ENCODE measurements at regions of chr10 and their contacts with region 1.

Region 1: DNA sequence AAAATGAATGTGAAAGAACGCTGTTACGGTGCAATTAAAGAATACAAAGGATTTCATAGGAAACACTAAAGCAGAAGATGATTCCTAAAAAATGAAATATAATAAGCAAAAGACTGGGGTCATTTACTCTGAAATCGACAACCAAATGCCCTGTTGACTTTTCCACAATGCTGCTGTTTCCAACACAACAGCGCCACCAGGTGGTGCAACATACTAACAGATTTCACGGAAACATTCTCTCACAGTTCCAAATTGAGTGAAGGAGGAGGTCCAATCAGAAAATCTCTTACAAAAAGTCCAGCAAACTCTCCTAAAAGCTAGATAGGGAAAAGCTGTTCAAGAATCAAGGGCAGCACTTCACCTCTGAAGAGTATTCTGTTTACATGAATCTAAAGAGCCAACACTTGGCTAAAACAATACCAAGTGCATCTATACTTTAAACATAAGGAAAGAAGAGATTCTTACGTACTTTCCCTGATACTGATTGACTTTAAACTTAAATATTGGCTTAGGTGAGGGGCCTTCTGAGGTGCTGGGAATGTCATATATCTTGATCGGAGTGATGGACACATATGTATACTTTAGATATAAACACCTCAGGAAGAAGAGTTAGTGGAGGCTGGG is 55.9 kb downstream of the UPF2 start:
- DNase-seq: peak in 5 of 6 donors; percentile 71 to 90 (median 81)
- ATAC-seq: peak; percentile 83 to 93 (median 92)
- H3K4me3 ChIP-seq: no peak overlapping the region
- H3K27ac ChIP-seq: peak overlapping the region in 3 of 4 donors; percentile 20 to 81 (median 66)
- H3K4me1 ChIP-seq: peaks cover 8 to 17% (median 12%) of the 10 kb centered on the region in 3 donors
- H3K27me3 ChIP-seq: no peaks in the 10 kb centered on the region
- CTCF ChIP-seq: peak; percentile 57 to 82 (median 68)

Region 2: GRCh38 chr10:11782793-11783557 is 203.7 kb before region 1 on chr10:
- intact Hi-C with region 1: loop called in 2 of 3 experiments (anchors 5 to 10 kb)
- DNase-seq: no peak
- ATAC-seq: peak; percentile 75 to 94 (median 88)
- H3K4me3 ChIP-seq: peak overlapping the region in 1 of 4 donors; percentile 1
- H3K27ac ChIP-seq: no peak overlapping the region
- H3K4me1 ChIP-seq: no peaks in the 10 kb centered on the region
- H3K27me3 ChIP-seq: no peaks in the 10 kb centered on the region
- CTCF ChIP-seq: peak; percentile 46 to 71 (median 50)

Region 3: DNA sequence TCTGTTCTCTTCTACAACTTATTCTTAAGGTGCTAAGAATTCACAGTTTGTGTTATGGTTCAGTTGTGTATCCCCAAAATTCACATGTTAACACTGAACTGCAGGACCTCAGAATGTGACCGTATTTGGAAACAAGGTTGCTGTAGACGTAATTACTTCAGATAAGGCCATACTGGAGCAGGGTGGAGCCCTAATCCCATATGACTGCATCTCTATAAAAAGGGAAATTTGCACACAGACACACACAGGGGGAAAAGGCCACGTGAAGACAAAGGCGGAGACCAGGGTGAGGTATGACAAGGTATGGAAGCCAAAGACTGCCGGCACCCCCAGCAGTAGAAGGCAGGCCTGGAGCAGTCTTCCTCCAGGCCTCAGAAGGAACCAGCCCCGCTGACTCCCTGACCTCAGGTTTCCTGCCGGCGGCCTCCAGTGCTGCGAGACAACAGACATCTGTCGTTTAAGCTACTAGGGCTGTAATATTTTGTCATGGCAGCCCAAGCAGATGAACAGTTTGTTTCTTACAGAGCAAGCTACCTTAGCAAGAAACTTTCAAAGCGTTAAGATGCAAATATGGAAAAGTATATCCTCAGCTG is 64.8 kb before region 1 on chr10:
- intact Hi-C with region 1: no loop called
- DNase-seq: no peak
- ATAC-seq: no peak
- H3K4me3 ChIP-seq: no peak overlapping the region
- H3K27ac ChIP-seq: no peak overlapping the region
- H3K4me1 ChIP-seq: no peaks in the 10 kb centered on the region
- H3K27me3 ChIP-seq: no peaks in the 10 kb centered on the region
- CTCF ChIP-seq: no peak

Region 4: DNA sequence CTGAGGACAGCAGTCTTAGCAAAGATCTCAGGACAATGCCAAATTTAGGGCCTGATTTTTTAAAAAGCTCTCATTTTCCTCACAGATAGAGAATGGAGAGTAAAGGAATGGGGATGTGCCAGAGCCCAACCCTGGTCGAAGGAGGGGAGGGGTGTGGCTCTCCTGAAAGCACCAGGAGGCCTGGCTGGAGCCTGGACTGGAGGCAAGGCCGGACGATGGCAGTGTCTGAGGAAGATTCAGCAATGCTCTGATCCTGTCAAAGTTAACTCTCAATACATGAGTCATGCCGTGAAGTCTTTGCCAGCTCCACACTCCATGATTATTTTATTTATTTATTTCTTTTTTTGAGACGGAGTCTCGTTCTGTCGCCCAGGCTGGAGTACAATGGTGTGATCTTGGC is 52.4 kb before region 1 on chr10:
- intact Hi-C with region 1: no loop called
- DNase-seq: no peak
- ATAC-seq: no peak
- H3K4me3 ChIP-seq: no peak overlapping the region
- H3K27ac ChIP-seq: no peak overlapping the region
- H3K4me1 ChIP-seq: no peaks in the 10 kb centered on the region
- H3K27me3 ChIP-seq: no peaks in the 10 kb centered on the region
- CTCF ChIP-seq: no peak

Region 5: DNA sequence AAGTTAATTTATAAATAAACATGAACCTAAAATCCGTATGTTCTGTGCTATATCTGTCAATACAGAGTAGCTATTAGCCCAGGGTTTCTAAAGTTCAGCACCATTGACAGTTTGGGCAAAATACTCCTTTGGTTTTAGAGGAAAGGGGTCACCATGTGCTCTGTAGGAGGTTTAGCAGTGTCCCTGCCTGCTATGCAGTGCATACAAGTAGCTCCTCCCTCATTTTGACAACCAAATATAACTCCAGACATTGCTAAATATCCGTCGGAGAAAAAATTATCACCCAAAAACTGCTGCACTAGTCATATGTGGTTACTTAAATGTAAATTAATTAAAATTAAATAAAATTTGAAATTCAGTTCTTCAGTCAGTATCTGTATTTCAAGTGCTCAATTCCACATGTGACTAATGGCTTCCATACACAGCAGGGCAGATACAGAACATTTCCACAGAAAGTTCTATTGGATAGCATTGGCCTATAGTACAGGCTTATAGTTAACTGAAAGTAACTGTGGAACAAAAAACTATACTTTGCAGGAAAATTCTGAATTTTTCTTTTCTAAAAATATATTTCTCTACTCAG is 49.5 kb after region 1 on chr10:
- intact Hi-C with region 1: no loop called
- DNase-seq: no peak
- ATAC-seq: no peak
- H3K4me3 ChIP-seq: no peak overlapping the region
- H3K27ac ChIP-seq: no peak overlapping the region
- H3K4me1 ChIP-seq: peaks cover 0 to 11% (median 7%) of the 10 kb centered on the region in 3 donors
- H3K27me3 ChIP-seq: no peaks in the 10 kb centered on the region
- CTCF ChIP-seq: no peak

Measured in pancreas (tissue), 10 donors.